BJ (cell line): ENCODE measurements at regions of chr7 and their contacts with region 1.

Region 1: DNA sequence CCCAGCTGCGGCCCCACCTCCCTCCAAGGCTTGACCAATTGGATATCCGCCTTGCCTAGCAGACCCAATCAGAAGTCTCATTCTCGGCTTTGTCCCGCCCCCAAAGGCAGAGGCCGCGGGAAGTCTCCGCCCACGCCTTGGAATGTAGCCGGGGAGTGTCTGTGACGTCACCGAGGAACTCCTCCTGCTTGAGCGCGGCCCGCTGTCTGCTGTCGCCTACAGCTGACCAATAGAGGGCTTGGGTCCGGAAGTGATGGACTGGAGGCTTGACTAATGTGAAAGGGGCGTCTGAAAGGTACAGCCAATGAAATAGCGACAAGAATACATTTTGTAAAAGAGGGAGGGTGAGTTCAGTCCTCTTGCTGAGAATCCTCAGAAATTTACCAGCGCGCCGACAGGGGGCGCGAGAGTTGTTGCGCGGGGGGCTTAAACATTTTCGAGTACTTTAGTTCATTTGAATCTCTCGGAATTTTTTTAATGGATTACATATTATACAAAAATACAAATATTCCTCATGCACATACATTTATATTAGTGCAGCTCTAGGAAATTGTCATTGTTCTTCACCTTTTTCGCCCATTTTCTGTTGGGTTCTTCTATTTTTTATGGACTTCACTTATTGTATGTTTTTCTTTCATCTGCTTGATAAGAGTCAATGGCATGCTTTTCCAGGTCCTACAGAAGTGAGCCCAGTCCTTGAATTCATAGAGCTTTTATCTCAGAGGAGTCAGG is 376 bp upstream of the CREB3L2 start:
- DNase-seq: peak; percentile 98
- H3K4me3 ChIP-seq: peak overlapping the region; percentile 97
- H3K27me3 ChIP-seq: no peaks in the 10 kb centered on the region
- CTCF ChIP-seq: peak; percentile 92

Region 2: GRCh38 chr7:137838706-137839315 is 163.5 kb before region 1 on chr7:
- CTCF ChIA-PET with region 1: no interaction called
- POLR2A ChIA-PET with region 1: no interaction called
- DNase-seq: no peak
- H3K4me3 ChIP-seq: no peak overlapping the region
- H3K27me3 ChIP-seq: no peaks in the 10 kb centered on the region
- CTCF ChIP-seq: no peak

Region 3: DNA sequence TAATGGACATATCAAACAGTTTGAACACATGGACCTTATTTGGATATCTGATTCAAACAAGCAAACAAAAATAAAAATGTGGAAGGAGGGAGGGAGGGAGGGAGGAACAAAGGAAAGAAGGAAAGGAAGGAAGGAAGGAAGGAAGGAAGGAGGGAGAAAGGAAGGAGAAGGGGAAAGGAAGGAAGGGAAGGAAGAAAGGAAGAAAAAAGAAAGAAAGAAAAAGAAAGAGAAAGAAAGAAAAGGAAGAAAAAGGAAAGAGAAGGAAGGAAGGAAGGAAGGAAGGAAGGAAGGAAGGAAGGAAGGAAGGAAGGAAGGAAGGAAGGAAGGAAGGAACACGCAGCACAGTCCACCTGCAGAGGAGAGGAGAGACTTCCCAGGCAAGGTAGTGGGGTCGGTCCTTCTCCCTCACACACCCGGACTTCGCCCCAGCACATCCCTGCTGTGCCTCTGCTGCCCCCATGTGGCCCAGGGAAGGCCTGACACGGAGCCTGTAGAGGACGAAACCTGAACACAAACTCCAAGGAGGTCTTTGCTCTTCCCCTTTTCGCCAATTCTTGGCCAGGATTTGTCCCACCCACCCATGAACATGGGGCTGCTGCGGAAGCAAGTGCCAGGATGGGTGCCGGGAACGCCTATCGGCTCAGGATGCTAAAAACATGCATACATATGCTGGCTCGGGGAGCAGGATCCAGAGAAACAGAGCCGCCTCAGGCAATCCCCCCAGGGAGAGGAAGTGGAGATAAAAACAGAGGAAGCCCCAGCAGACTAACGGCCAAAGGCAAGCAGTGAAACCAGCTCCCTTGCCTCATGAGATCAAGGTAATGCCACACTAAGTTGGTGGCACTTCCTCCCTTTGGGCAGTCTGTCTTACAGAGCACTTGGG is 103.2 kb before region 1 on chr7:
- CTCF ChIA-PET with region 1: interaction called, 371 read pairs
- POLR2A ChIA-PET with region 1: no interaction called
- DNase-seq: no peak
- H3K4me3 ChIP-seq: no peak overlapping the region
- H3K27me3 ChIP-seq: no peaks in the 10 kb centered on the region
- CTCF ChIP-seq: peak; percentile 99

Region 4: DNA sequence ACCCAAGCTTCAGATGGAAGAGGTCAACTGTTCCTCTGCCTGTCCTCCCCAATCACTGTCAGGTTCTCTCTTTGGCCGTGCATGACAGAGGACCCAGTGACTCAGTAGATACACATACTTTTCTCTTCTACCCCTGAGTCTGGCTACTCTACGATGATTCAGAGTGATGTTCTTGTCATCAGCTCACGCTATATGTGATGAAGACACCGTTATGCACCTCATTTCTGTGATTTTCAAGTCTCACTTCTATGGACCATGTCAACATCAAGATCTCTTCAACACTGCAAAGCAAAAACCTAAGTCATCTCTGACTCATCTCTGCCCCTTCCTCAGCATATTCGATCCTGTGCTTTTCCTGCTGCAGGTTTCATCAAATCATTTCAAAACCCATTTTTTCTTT is 78.9 kb before region 1 on chr7:
- CTCF ChIA-PET with region 1: interaction called, 14 read pairs
- POLR2A ChIA-PET with region 1: no interaction called
- DNase-seq: no peak
- H3K4me3 ChIP-seq: no peak overlapping the region
- H3K27me3 ChIP-seq: no peaks in the 10 kb centered on the region
- CTCF ChIP-seq: no peak

Region 5: DNA sequence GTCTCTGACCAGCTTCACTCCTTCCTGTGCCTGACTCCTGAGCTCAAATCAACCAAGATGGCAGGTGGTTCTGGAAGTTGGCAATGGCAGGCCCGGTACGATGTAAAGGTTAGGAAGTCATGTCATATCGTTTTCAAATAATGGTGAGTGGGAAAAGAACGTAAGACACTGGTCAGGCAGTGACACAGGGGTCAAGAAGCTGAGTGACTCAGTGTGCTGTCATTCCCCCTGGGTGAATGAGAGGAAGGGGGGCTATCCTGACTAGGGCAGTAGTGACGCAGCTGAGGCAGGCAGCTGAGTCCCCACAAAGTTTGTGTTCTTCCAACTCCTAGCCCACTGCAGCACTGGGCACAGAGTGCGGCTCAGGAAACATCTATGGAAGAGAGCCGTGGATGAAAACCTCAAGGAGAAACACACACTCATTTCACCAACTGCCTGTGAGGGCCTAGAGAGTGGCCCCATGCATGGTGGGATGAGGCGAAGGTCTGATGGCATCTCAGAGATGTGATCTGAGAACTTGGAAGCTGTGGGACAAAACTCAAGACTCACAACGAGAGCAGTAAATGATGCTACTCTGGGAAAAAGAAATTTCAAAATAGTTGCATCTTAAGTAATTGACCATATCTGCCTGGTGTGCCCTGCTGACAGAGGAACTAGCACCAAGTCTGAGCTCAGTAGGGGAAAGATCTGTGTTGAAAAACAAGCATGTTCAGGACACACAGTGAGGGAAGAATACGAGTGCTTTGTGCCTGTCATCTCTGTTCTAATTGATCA is 23.6 kb before region 1 on chr7:
- CTCF ChIA-PET with region 1: interaction called, 34 read pairs
- POLR2A ChIA-PET with region 1: no interaction called
- DNase-seq: peak; percentile 87
- H3K4me3 ChIP-seq: no peak overlapping the region
- H3K27me3 ChIP-seq: no peaks in the 10 kb centered on the region
- CTCF ChIP-seq: no peak

Region 6: GRCh38 chr7:137985253-137985896 is 16.9 kb before region 1 on chr7:
- CTCF ChIA-PET with region 1: interaction called, 34 read pairs
- POLR2A ChIA-PET with region 1: interaction called, 6 read pairs
- DNase-seq: no peak
- H3K4me3 ChIP-seq: no peak overlapping the region
- H3K27me3 ChIP-seq: no peaks in the 10 kb centered on the region
- CTCF ChIP-seq: no peak

Region 7: DNA sequence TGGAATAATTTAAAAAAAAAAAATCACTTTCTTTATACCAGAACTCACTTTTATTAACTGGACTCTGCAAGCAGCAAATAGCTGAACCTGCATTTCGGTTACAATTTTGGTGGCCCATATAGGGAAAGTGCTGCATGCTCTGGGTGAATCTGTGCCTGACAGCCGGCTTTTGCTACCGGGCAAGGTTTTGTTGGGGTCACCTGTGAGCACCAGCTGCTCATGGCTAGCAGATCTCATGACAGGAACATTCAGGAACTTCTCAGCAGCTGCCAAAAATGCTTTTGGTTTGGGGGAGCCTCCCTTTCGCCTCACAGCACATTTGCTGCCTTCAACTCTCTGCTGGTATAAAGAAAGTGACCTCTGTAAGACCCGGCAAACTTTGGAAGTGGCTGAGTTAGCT is 12.8 kb after region 1 on chr7:
- CTCF ChIA-PET with region 1: interaction called, 25 read pairs
- POLR2A ChIA-PET with region 1: no interaction called
- DNase-seq: no peak
- H3K4me3 ChIP-seq: no peak overlapping the region
- H3K27me3 ChIP-seq: peaks cover 3% of the 10 kb centered on the region; the same call in 1 of the 2 replicates
- CTCF ChIP-seq: no peak

Region 8: DNA sequence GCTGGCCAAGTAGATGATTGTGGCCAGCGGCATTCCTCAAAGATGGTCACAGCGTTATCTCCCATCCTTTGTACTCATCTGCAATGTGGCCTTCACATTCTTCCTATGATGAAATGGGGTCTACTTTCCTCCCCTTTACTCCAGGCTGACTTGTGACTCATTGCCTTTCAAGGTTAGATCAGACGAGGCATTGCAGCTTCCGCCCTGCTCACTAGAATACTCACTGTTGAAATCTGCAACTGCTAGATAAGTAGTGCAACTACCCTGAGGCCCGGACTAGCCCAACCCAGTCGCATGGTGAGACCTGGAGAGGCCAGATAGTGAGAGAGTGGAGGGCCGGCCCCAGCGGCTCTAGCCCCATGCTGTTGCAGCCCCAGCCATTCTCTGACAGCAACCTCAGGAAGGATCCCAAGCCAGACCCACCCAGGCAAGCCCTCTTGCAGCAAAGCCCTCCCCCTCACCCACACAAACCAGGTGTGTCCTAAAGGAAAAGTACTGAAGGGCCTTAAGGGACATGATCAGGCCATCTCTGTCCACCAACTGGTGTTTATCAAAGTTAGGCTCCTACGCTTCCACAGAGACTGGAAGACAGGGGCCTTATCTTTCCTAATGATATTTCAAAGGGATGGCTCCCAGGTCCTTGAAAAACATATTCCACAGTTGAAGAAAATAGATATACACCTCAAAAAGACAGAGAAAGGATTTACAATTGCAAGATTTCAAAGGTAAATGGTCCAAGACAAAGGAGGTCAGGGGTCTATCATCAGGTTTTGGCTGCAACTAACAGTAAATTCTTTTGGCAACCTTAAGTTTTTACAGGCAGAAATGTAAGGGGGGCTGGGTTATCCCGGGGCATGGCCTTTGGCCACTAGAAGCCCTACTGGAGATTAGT is 350.6 kb after region 1 on chr7:
- CTCF ChIA-PET with region 1: no interaction called
- POLR2A ChIA-PET with region 1: no interaction called
- DNase-seq: no peak
- H3K4me3 ChIP-seq: no peak overlapping the region
- H3K27me3 ChIP-seq: no peaks in the 10 kb centered on the region
- CTCF ChIP-seq: no peak